Activated CD4-positive, alpha-beta memory T cell treated with anti-CD3 and anti-CD28 coated beads, Interleukin-2, amount 10 ng/mL, durations not matched to agents 7 days and 5 days (primary cell): ENCODE measurements at regions of chr5 and their contacts with region 1.

Region 1: DNA sequence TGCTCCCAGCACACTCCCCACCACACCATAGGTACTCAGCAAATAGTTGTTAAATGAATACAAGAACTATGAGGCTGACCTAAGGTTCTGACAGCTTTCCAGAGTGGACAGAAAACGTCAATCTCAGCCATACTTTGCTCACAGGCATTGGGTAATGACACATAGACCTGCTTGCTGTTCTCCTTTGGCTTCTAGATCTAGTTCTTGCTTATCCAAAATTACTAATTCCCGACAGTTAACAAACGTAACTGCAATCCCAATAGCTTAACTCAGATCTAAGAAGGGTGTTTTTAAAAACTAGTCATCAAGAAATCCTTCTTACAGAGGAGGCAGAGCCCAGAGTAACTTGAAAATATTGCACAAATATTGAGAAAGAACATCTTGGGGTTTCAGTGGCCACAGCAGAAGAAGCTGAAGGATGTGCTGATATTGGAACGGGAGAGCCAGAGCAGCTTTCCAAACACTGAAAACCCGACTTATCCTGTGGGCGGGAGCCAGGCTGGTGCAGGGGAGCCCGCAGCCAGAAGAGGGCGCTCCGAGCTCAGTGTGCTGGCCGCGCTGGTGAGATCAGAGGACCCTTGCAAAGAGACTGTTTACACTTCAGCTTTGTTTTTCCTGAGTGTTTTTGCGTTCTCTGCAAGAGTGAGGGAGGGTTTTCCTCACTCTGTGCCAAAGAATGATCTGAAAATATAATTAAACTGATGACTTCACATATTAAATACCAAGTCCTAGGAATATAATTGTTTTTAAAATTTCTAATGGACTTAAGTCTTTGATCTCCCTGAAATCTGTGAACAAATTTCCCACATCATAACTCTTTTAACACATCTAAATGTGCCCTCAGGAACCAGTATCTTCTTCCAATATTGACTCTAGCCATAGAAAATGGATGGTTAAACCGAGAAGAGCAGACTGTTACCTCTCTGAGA is 30.3 kb downstream of the FGF1 start:
- DNase-seq: peak; percentile 68
- H3K4me3 Mint-ChIP-seq: no peak overlapping the region
- H3K27ac Mint-ChIP-seq: no peak overlapping the region
- H3K4me1 Mint-ChIP-seq: no peaks in the 10 kb centered on the region
- H3K27me3 Mint-ChIP-seq: peaks cover 15% of the 10 kb centered on the region

Region 2: GRCh38 chr5:142618130-142618523 is 37.5 kb before region 1 on chr5:
- CTCF ChIA-PET with region 1: interaction called, 10 read pairs
- POLR2A ChIA-PET with region 1: no interaction called
- DNase-seq: peak; percentile 37
- H3K4me3 Mint-ChIP-seq: no peak overlapping the region
- H3K27ac Mint-ChIP-seq: no peak overlapping the region
- H3K4me1 Mint-ChIP-seq: peaks cover 15% of the 10 kb centered on the region
- H3K27me3 Mint-ChIP-seq: peaks cover 11% of the 10 kb centered on the region

Region 3: GRCh38 chr5:142644640-142645361 is 10.8 kb before region 1 on chr5:
- CTCF ChIA-PET with region 1: interaction called, 22 read pairs
- POLR2A ChIA-PET with region 1: no interaction called
- DNase-seq: no peak
- H3K4me3 Mint-ChIP-seq: no peak overlapping the region
- H3K27ac Mint-ChIP-seq: no peak overlapping the region
- H3K4me1 Mint-ChIP-seq: no peaks in the 10 kb centered on the region
- H3K27me3 Mint-ChIP-seq: peaks cover 15% of the 10 kb centered on the region

Region 4: DNA sequence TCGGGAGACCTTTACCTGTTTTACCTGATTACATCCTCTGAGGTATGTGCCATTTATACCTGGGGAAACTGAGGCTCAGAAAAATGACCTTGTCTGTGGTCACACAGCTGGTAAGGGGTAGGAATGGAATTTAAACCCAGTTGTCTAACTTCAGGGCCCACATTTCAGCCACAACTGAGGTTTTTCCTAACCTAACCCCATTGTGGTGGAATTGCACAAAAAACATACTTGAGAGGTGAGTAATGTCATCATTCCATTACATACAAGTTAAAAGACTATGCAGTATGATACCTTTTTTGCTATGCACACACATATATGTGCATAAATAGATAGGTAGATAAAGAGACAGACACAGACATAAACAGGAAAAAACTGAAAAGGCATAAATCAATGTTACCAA is 16.2 kb after region 1 on chr5:
- CTCF ChIA-PET with region 1: interaction called, 18 read pairs
- POLR2A ChIA-PET with region 1: no interaction called
- DNase-seq: no peak
- H3K4me3 Mint-ChIP-seq: no peak overlapping the region
- H3K27ac Mint-ChIP-seq: no peak overlapping the region
- H3K4me1 Mint-ChIP-seq: no peaks in the 10 kb centered on the region
- H3K27me3 Mint-ChIP-seq: peaks cover 3% of the 10 kb centered on the region

Region 5: DNA sequence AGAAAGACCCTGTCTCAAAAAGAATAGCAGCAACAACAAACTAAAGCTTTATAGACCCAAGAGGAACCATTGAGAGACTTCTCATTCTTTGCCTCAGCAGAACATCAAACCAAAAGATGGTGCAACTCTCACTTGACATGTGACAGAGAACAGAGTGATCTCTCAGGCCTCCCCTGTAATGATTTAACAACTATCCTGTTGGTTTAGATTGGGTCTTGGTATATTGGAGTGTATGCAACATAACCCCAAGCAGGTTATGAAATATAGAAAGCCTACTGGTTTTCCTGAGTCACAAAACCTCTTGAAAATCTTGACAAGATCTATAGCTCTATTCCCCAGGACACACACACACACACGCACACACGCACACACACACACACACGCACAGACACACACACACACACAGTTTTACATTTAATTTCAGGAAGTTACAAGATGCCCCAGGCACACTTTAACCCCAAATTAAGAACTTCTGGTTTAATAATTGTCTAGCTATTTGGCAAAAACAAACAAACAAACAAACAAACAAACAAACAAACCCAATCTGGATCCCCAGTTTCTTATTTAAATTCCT is 36.8 kb after region 1 on chr5:
- CTCF ChIA-PET with region 1: interaction called, 55 read pairs
- POLR2A ChIA-PET with region 1: no interaction called
- DNase-seq: no peak
- H3K4me3 Mint-ChIP-seq: no peak overlapping the region
- H3K27ac Mint-ChIP-seq: no peak overlapping the region
- H3K4me1 Mint-ChIP-seq: no peaks in the 10 kb centered on the region
- H3K27me3 Mint-ChIP-seq: no peaks in the 10 kb centered on the region

Region 6: DNA sequence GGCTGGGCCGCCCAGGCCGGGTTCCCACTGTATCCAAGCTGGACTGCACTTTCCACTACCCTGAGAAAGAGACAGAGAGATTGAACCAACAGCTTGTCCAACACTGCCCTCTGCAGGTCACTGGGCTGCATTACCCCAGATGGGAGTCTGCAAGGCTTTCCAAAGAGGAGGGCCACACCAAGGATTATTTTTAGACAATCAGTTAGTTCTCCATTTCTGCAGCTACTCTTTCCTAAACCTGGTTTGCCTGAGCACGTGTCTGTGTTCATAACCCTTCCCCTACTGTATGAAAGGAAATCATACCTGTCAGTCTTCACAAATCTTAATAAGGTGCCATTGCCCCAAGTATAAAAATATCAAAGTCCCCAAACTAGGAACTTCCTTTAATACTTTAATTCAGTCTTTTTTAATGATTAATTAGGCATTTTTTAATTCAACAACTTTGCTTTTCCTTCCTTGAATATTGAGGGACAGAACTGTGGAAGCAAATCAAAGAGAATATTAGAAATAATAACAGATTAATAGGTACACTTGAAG is 43.6 kb after region 1 on chr5:
- CTCF ChIA-PET with region 1: interaction called, 55 read pairs
- POLR2A ChIA-PET with region 1: interaction called, 3 read pairs
- DNase-seq: peak; percentile 80
- H3K4me3 Mint-ChIP-seq: no peak overlapping the region
- H3K27ac Mint-ChIP-seq: no peak overlapping the region
- H3K4me1 Mint-ChIP-seq: no peaks in the 10 kb centered on the region
- H3K27me3 Mint-ChIP-seq: peaks cover 7% of the 10 kb centered on the region

Region 7: GRCh38 chr5:142888469-142889085 is 233.0 kb after region 1 on chr5:
- CTCF ChIA-PET with region 1: interaction called, 15 read pairs
- POLR2A ChIA-PET with region 1: no interaction called
- DNase-seq: no peak
- H3K4me3 Mint-ChIP-seq: no peak overlapping the region
- H3K27ac Mint-ChIP-seq: no peak overlapping the region
- H3K4me1 Mint-ChIP-seq: peaks cover 12% of the 10 kb centered on the region
- H3K27me3 Mint-ChIP-seq: no peaks in the 10 kb centered on the region